ENCODE measurements at regions of chr4 and their contacts with region 1.

Region 1: GRCh38 chr4:13654158-13654797 is 26.8 kb upstream of the BOD1L1 start:
- DNase-seq: peak; percentile 90
- ATAC-seq: peak; percentile 95
- H3K4me3 Mint-ChIP-seq: peak overlapping the region; percentile 69
- H3K27ac Mint-ChIP-seq: no peak overlapping the region
- H3K4me1 Mint-ChIP-seq: peaks cover 12% of the 10 kb centered on the region
- H3K27me3 Mint-ChIP-seq: peaks cover 2% of the 10 kb centered on the region
- CTCF ChIP-seq: peak; percentile 78

Region 2: GRCh38 chr4:13627606-13628301 is 26.5 kb before region 1 on chr4 and contains the start of gene BOD1L1:
- CTCF ChIA-PET with region 1: interaction called, 36 read pairs
- POLR2A ChIA-PET with region 1: interaction called, 9 read pairs
- intact Hi-C with region 1: no loop called
- DNase-seq: peak; percentile 86
- ATAC-seq: peak; percentile 88
- H3K4me3 Mint-ChIP-seq: peak within 1 kb of the TSS; percentile 90
- H3K27ac Mint-ChIP-seq: peak within 1 kb of the TSS; percentile 95
- H3K4me1 Mint-ChIP-seq: peaks cover 37% of the 10 kb centered on the region
- H3K27me3 Mint-ChIP-seq: no peaks in the 10 kb centered on the region
- CTCF ChIP-seq: no peak
- total RNA-seq, gene BOD1L1: 27.2 to 28.9 TPM

Region 3: GRCh38 chr4:13640149-13640940 is 13.9 kb before region 1 on chr4:
- CTCF ChIA-PET with region 1: interaction called, 30 read pairs
- POLR2A ChIA-PET with region 1: no interaction called
- intact Hi-C with region 1: no loop called
- DNase-seq: no peak
- ATAC-seq: no peak
- H3K4me3 Mint-ChIP-seq: no peak overlapping the region
- H3K27ac Mint-ChIP-seq: no peak overlapping the region
- H3K4me1 Mint-ChIP-seq: no peaks in the 10 kb centered on the region
- H3K27me3 Mint-ChIP-seq: peaks cover 17% of the 10 kb centered on the region
- CTCF ChIP-seq: no peak

Region 4: GRCh38 chr4:13670456-13671160 is 16.3 kb after region 1 on chr4:
- CTCF ChIA-PET with region 1: interaction called, 10 read pairs
- POLR2A ChIA-PET with region 1: no interaction called
- intact Hi-C with region 1: no loop called
- DNase-seq: no peak
- ATAC-seq: no peak
- H3K4me3 Mint-ChIP-seq: no peak overlapping the region
- H3K27ac Mint-ChIP-seq: no peak overlapping the region
- H3K4me1 Mint-ChIP-seq: no peaks in the 10 kb centered on the region
- H3K27me3 Mint-ChIP-seq: peaks cover 15% of the 10 kb centered on the region
- CTCF ChIP-seq: no peak